ENCODE measurements at regions of chr7 and their contacts with region 1.

Region 1: GRCh38 chr7:130912862-130913631 is 179.0 kb upstream of the KLF14 start:
- DNase-seq: peak; percentile 49 to 91 (median 75)
- ATAC-seq: peak; percentile 90
- H3K4me3 ChIP-seq: peak overlapping the region; percentile 66
- H3K4me3 Mint-ChIP-seq: peak overlapping the region; percentile 80 to 100 (median 94)
- H3K27ac ChIP-seq: peak overlapping the region; percentile 88
- H3K27ac Mint-ChIP-seq: peak overlapping the region; percentile 86 to 98 (median 95)
- H3K4me1 ChIP-seq: peaks cover 46 to 73% of the 10 kb centered on the region in 2 donors
- H3K4me1 Mint-ChIP-seq: peaks cover 53 to 93% (median 89%) of the 10 kb centered on the region in 7 donors
- H3K27me3 ChIP-seq: no peaks in the 10 kb centered on the region
- H3K27me3 Mint-ChIP-seq: no peaks in the 10 kb centered on the region

Region 2: GRCh38 chr7:130529417-130529816 is 383.6 kb before region 1 on chr7:
- CTCF ChIA-PET with region 1: no interaction called
- POLR2A ChIA-PET with region 1: no interaction called
- intact Hi-C with region 1: no loop called
- DNase-seq: no peak
- ATAC-seq: no peak
- H3K4me3 ChIP-seq: no peak overlapping the region
- H3K4me3 Mint-ChIP-seq: no peak overlapping the region
- H3K27ac ChIP-seq: no peak overlapping the region
- H3K27ac Mint-ChIP-seq: peak overlapping the region in 1 of 9 donors; percentile 30
- H3K4me1 ChIP-seq: no peaks in the 10 kb centered on the region
- H3K4me1 Mint-ChIP-seq: peaks cover 0 to 4% (median 0%) of the 10 kb centered on the region in 7 donors
- H3K27me3 ChIP-seq: no peaks in the 10 kb centered on the region
- H3K27me3 Mint-ChIP-seq: no peaks in the 10 kb centered on the region

Region 3: GRCh38 chr7:130929896-130930659 is 17.0 kb after region 1 on chr7:
- CTCF ChIA-PET with region 1: interaction called, 3 read pairs
- POLR2A ChIA-PET with region 1: interaction called, 4 read pairs
- intact Hi-C with region 1: loop called (anchors 1 kb)
- DNase-seq: peak in 6 of 9 donors; percentile 27 to 62 (median 40)
- ATAC-seq: peak; percentile 69
- H3K4me3 ChIP-seq: no peak overlapping the region
- H3K4me3 Mint-ChIP-seq: peak overlapping the region in 8 of 10 donors; percentile 37 to 66 (median 51)
- H3K27ac ChIP-seq: peak overlapping the region; percentile 9
- H3K27ac Mint-ChIP-seq: peak overlapping the region in 8 of 9 donors; percentile 59 to 88 (median 78)
- H3K4me1 ChIP-seq: peaks cover 47 to 64% of the 10 kb centered on the region in 2 donors
- H3K4me1 Mint-ChIP-seq: peaks cover 68 to 98% (median 85%) of the 10 kb centered on the region in 7 donors
- H3K27me3 ChIP-seq: no peaks in the 10 kb centered on the region
- H3K27me3 Mint-ChIP-seq: no peaks in the 10 kb centered on the region

Region 4: GRCh38 chr7:130982160-130982638 is 69.2 kb after region 1 on chr7:
- CTCF ChIA-PET with region 1: interaction called, 6 read pairs
- POLR2A ChIA-PET with region 1: interaction called, 3 read pairs
- intact Hi-C with region 1: loop called (anchors 2 kb)
- DNase-seq: peak in 7 of 9 donors; percentile 33 to 62 (median 56)
- ATAC-seq: peak; percentile 88
- H3K4me3 ChIP-seq: peak overlapping the region; percentile 9
- H3K4me3 Mint-ChIP-seq: no peak overlapping the region
- H3K27ac ChIP-seq: peak overlapping the region; percentile 65
- H3K27ac Mint-ChIP-seq: no peak overlapping the region
- H3K4me1 ChIP-seq: peaks cover 45 to 61% of the 10 kb centered on the region in 2 donors
- H3K4me1 Mint-ChIP-seq: peaks cover 7 to 39% (median 11%) of the 10 kb centered on the region in 7 donors
- H3K27me3 ChIP-seq: no peaks in the 10 kb centered on the region
- H3K27me3 Mint-ChIP-seq: no peaks in the 10 kb centered on the region

Region 5: DNA sequence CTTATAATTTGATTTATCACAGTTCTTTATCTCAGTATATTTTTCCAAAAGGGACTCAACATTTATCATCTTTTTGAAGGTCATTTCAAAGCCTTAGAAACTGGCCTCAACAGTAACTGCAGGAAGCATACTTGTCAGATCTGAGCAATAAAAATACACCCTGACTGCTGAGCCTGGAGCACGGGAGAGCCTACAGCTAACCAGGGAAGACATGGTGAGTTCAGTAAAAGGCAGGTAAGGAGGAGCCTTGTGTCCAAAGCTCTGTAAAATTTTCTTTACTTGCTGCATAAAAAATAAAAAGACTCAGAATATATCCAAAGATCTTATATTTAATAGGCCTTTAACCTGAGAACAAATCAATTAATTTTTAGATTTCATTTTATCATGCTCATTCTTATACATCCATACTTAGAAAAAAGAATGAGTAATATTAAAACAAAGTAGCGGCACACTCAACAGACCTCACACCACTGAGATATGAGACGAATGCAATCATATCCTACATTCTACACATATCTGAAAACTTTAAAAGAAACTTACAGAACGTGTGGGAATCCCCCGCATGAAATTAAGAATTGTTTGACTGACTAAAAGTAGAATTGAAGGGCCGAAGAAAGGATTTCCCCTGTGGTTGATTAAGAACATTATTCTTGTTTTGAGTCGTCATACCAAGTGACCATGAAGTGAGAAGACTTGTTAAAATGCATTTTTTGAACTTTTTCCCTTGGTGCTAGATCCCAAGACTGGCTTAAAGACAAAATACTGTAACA is 118.2 kb after region 1 on chr7:
- CTCF ChIA-PET with region 1: no interaction called
- POLR2A ChIA-PET with region 1: no interaction called
- intact Hi-C with region 1: loop called in 1 of 2 experiments (anchors 5 kb)
- DNase-seq: no peak
- ATAC-seq: peak; percentile 33
- H3K4me3 ChIP-seq: no peak overlapping the region
- H3K4me3 Mint-ChIP-seq: peak overlapping the region; percentile 25 to 80 (median 69)
- H3K27ac ChIP-seq: no peak overlapping the region
- H3K27ac Mint-ChIP-seq: peak overlapping the region in 8 of 9 donors; percentile 24 to 86 (median 78)
- H3K4me1 ChIP-seq: peaks cover 45 to 53% of the 10 kb centered on the region in 2 donors
- H3K4me1 Mint-ChIP-seq: peaks cover 57 to 96% (median 94%) of the 10 kb centered on the region in 7 donors
- H3K27me3 ChIP-seq: no peaks in the 10 kb centered on the region
- H3K27me3 Mint-ChIP-seq: no peaks in the 10 kb centered on the region

Region 6: GRCh38 chr7:131057015-131057793 is 144.2 kb after region 1 on chr7:
- CTCF ChIA-PET with region 1: no interaction called
- POLR2A ChIA-PET with region 1: no interaction called
- intact Hi-C with region 1: loop called in 1 of 2 experiments (anchors 1 kb)
- DNase-seq: peak in 7 of 9 donors; percentile 56 to 82 (median 76)
- ATAC-seq: peak; percentile 67
- H3K4me3 ChIP-seq: peak overlapping the region; percentile 11
- H3K4me3 Mint-ChIP-seq: peak overlapping the region; percentile 72 to 93 (median 82)
- H3K27ac ChIP-seq: peak overlapping the region; percentile 76
- H3K27ac Mint-ChIP-seq: peak overlapping the region; percentile 94 to 100 (median 98)
- H3K4me1 ChIP-seq: peaks cover 69 to 77% of the 10 kb centered on the region in 2 donors
- H3K4me1 Mint-ChIP-seq: peaks cover 54 to 87% (median 72%) of the 10 kb centered on the region in 7 donors
- H3K27me3 ChIP-seq: no peaks in the 10 kb centered on the region
- H3K27me3 Mint-ChIP-seq: no peaks in the 10 kb centered on the region

Region 7: DNA sequence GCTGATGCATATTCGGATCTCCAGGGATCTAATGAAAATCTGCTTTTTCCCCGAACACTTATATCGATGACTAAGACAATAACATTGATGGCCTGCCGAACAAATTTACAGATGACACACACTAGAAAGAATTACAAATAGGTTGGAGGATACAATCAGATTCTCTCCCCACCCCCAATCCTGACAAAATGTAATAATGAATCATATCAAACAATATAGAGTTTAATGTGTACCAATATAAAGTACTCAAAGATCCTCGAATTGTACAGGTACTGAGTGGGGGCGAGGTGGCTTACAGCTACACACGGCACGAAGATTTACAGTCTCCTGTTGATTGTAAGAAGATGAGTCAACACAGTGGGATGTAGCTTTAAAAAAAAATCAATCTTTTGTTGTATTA is 232.0 kb after region 1 on chr7:
- CTCF ChIA-PET with region 1: no interaction called
- POLR2A ChIA-PET with region 1: no interaction called
- intact Hi-C with region 1: no loop called
- DNase-seq: no peak
- ATAC-seq: no peak
- H3K4me3 ChIP-seq: no peak overlapping the region
- H3K4me3 Mint-ChIP-seq: no peak overlapping the region
- H3K27ac ChIP-seq: no peak overlapping the region
- H3K27ac Mint-ChIP-seq: no peak overlapping the region
- H3K4me1 ChIP-seq: no peaks in the 10 kb centered on the region
- H3K4me1 Mint-ChIP-seq: peaks cover 0 to 3% (median 0%) of the 10 kb centered on the region in 7 donors
- H3K27me3 ChIP-seq: no peaks in the 10 kb centered on the region
- H3K27me3 Mint-ChIP-seq: peaks cover 0 to 13% (median 0%) of the 10 kb centered on the region in 5 donors

Region 8: GRCh38 chr7:131327626-131328376 is 414.8 kb after region 1 on chr7 and contains the start of gene MKLN1:
- CTCF ChIA-PET with region 1: no interaction called
- POLR2A ChIA-PET with region 1: interaction called, 3 read pairs
- intact Hi-C with region 1: loop called (anchors 5 kb)
- DNase-seq: peak; percentile 82 to 91 (median 86)
- ATAC-seq: peak; percentile 99
- H3K4me3 ChIP-seq: peak within 1 kb of the TSS; percentile 88
- H3K4me3 Mint-ChIP-seq: peak within 1 kb of the TSS; percentile 88 to 100 (median 94)
- H3K27ac ChIP-seq: peak within 1 kb of the TSS; percentile 94
- H3K27ac Mint-ChIP-seq: peak within 1 kb of the TSS; percentile 86 to 99 (median 97)
- H3K4me1 ChIP-seq: peaks cover 26 to 43% of the 10 kb centered on the region in 2 donors
- H3K4me1 Mint-ChIP-seq: peaks cover 35 to 85% (median 71%) of the 10 kb centered on the region in 7 donors
- H3K27me3 ChIP-seq: no peaks in the 10 kb centered on the region
- H3K27me3 Mint-ChIP-seq: no peaks in the 10 kb centered on the region
- total RNA-seq, gene MKLN1: 42.0 to 69.8 (median 59.3) TPM

Measured in naive thymus-derived CD4-positive, alpha-beta T cell (primary cell).